B cell (primary cell): ENCODE measurements at regions of chr14 and their contacts with region 1.

Region 1: DNA sequence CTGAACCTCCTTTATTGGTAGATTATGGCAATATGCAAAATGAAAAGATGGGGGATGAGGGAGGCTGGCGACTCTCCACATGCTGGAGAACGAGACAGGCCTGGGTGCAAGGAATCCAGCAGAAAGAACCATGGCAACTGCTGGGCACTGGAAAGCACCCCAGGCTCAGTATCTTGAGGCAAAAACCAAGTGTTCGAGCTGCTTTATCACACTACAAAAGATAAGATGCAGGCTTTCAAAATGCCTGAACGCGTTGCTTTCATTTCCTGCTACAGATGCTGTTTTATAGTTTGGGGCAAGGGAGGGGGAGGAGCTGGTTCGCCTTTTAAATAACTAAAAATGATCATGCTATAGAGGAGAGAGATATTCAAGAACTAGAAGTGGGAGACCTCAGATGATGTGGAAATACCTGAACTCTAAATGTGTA is 38.9 kb downstream of the NIN start:
- DNase-seq: peak; percentile 64
- ATAC-seq: peak; percentile 26
- H3K4me3 ChIP-seq: peak overlapping the region in 3 of 5 experiments; percentile 5 to 41 (median 24)
- H3K4me3 Mint-ChIP-seq: peak overlapping the region; percentile 61
- H3K27ac ChIP-seq: peak overlapping the region; percentile 42 to 91
- H3K27ac Mint-ChIP-seq: peak overlapping the region; percentile 73
- H3K4me1 ChIP-seq: peaks cover 99 to 100% of the 10 kb centered on the region in 2 donors
- H3K4me1 Mint-ChIP-seq: peaks cover 96% of the 10 kb centered on the region
- H3K27me3 ChIP-seq: no peaks in the 10 kb centered on the region
- H3K27me3 Mint-ChIP-seq: no peaks in the 10 kb centered on the region
- CTCF ChIP-seq: no peak

Region 2: GRCh38 chr14:50756300-50756699 is 35.8 kb before region 1 on chr14:
- CTCF ChIA-PET with region 1: interaction called, 3 read pairs
- POLR2A ChIA-PET with region 1: no interaction called
- intact Hi-C with region 1: loop called (anchors 5 kb)
- DNase-seq: peak; percentile 95
- ATAC-seq: peak; percentile 93
- H3K4me3 ChIP-seq: no peak overlapping the region
- H3K4me3 Mint-ChIP-seq: no peak overlapping the region
- H3K27ac ChIP-seq: peak overlapping the region; percentile 92 to 93
- H3K27ac Mint-ChIP-seq: no peak overlapping the region
- H3K4me1 ChIP-seq: peaks cover 15 to 21% of the 10 kb centered on the region in 2 donors
- H3K4me1 Mint-ChIP-seq: peaks cover 4% of the 10 kb centered on the region
- H3K27me3 ChIP-seq: no peaks in the 10 kb centered on the region
- H3K27me3 Mint-ChIP-seq: no peaks in the 10 kb centered on the region
- CTCF ChIP-seq: no peak

Region 3: DNA sequence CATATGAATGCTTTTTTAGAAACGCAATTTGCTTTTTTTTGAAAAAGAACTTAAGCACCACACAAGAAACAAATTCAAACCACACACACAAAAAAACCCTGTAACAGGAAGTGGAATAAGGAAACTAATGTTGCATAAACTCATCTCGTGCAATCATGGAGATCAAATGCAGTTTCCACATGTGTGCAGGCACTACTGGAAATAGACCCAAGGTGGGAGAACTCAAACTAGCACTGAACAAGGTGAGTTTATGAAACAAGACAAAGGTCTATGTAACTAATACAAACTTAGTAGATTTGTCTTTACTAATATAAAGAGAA is 21.4 kb after region 1 on chr14:
- CTCF ChIA-PET with region 1: interaction called, 6 read pairs
- POLR2A ChIA-PET with region 1: no interaction called
- intact Hi-C with region 1: loop called (anchors 2 kb)
- DNase-seq: peak; percentile 67
- ATAC-seq: peak; percentile 72
- H3K4me3 ChIP-seq: peak overlapping the region in 4 of 5 experiments; percentile 10 to 57 (median 40)
- H3K4me3 Mint-ChIP-seq: peak overlapping the region; percentile 84
- H3K27ac ChIP-seq: peak overlapping the region; percentile 38 to 54
- H3K27ac Mint-ChIP-seq: peak overlapping the region; percentile 90
- H3K4me1 ChIP-seq: peaks cover 46 to 49% of the 10 kb centered on the region in 2 donors
- H3K4me1 Mint-ChIP-seq: peaks cover 60% of the 10 kb centered on the region
- H3K27me3 ChIP-seq: no peaks in the 10 kb centered on the region
- H3K27me3 Mint-ChIP-seq: no peaks in the 10 kb centered on the region
- CTCF ChIP-seq: no peak

Region 4: GRCh38 chr14:50823051-50823761 is 31.1 kb after region 1 on chr14:
- CTCF ChIA-PET with region 1: interaction called, 21 read pairs
- POLR2A ChIA-PET with region 1: interaction called, 7 read pairs
- intact Hi-C with region 1: loop called (anchors 2 kb)
- DNase-seq: peak; percentile 52
- ATAC-seq: peak; percentile 41
- H3K4me3 ChIP-seq: peak overlapping the region; percentile 23 to 60 (median 42)
- H3K4me3 Mint-ChIP-seq: peak overlapping the region; percentile 85
- H3K27ac ChIP-seq: peak overlapping the region; percentile 71 to 92
- H3K27ac Mint-ChIP-seq: peak overlapping the region; percentile 92
- H3K4me1 ChIP-seq: peaks cover 78 to 86% of the 10 kb centered on the region in 2 donors
- H3K4me1 Mint-ChIP-seq: peaks cover 91% of the 10 kb centered on the region
- H3K27me3 ChIP-seq: no peaks in the 10 kb centered on the region
- H3K27me3 Mint-ChIP-seq: no peaks in the 10 kb centered on the region
- CTCF ChIP-seq: no peak